ENCODE measurements at regions of chr3 and their contacts with region 1.

Region 1: GRCh38 chr3:65751123-65751700 is 287.5 kb downstream of the MAGI1 start:
- DNase-seq: no peak
- ATAC-seq: no peak
- H3K4me3 Mint-ChIP-seq: no peak overlapping the region
- H3K27ac Mint-ChIP-seq: no peak overlapping the region
- H3K4me1 Mint-ChIP-seq: no peaks in the 10 kb centered on the region
- H3K27me3 Mint-ChIP-seq: no peaks in the 10 kb centered on the region
- CTCF ChIP-seq: no peak

Region 2: GRCh38 chr3:64533617-64534317 is 1217.4 kb before region 1 on chr3:
- CTCF ChIA-PET with region 1: interaction called, 3 read pairs
- POLR2A ChIA-PET with region 1: no interaction called
- intact Hi-C with region 1: loop called (anchors 5 kb)
- DNase-seq: peak; percentile 17
- ATAC-seq: peak; percentile 31
- H3K4me3 Mint-ChIP-seq: no peak overlapping the region
- H3K27ac Mint-ChIP-seq: no peak overlapping the region
- H3K4me1 Mint-ChIP-seq: no peaks in the 10 kb centered on the region
- H3K27me3 Mint-ChIP-seq: peaks cover 5% of the 10 kb centered on the region
- CTCF ChIP-seq: no peak

Region 3: GRCh38 chr3:65385805-65386204 is 365.4 kb before region 1 on chr3:
- CTCF ChIA-PET with region 1: no interaction called
- POLR2A ChIA-PET with region 1: no interaction called
- intact Hi-C with region 1: no loop called
- DNase-seq: no peak
- ATAC-seq: no peak
- H3K4me3 Mint-ChIP-seq: no peak overlapping the region
- H3K27ac Mint-ChIP-seq: no peak overlapping the region
- H3K4me1 Mint-ChIP-seq: no peaks in the 10 kb centered on the region
- H3K27me3 Mint-ChIP-seq: no peaks in the 10 kb centered on the region
- CTCF ChIP-seq: no peak